ENCODE measurements at regions of chr17 and their contacts with region 1.

Region 1: GRCh38 chr17:40014375-40014980 is 762 bp upstream of the CSF3 start:
- DNase-seq: no peak
- H3K4me3 ChIP-seq: no peak overlapping the region
- H3K27ac ChIP-seq: peak overlapping the region; percentile 56
- H3K4me1 ChIP-seq: peaks cover 57% of the 10 kb centered on the region
- H3K27me3 ChIP-seq: no peaks in the 10 kb centered on the region
- CTCF ChIP-seq: no peak

Region 2: GRCh38 chr17:40168262-40168832 is 153.9 kb after region 1 on chr17:
- intact Hi-C with region 1: loop called (anchors 5 kb)
- DNase-seq: no peak
- H3K4me3 ChIP-seq: no peak overlapping the region
- H3K27ac ChIP-seq: peak overlapping the region; percentile 57
- H3K4me1 ChIP-seq: peaks cover 13% of the 10 kb centered on the region
- H3K27me3 ChIP-seq: no peaks in the 10 kb centered on the region
- CTCF ChIP-seq: peak; percentile 86

Region 3: GRCh38 chr17:40191237-40192208 is 177.0 kb after region 1 on chr17:
- intact Hi-C with region 1: no loop called
- DNase-seq: peak; percentile 77
- H3K4me3 ChIP-seq: peak overlapping the region; percentile 74
- H3K27ac ChIP-seq: peak overlapping the region; percentile 66
- H3K4me1 ChIP-seq: peaks cover 17% of the 10 kb centered on the region
- H3K27me3 ChIP-seq: no peaks in the 10 kb centered on the region
- CTCF ChIP-seq: peak; percentile 73

Measured in left ventricle myocardium inferior (tissue), 1 donor.